ENCODE measurements at regions of chr17 and their contacts with region 1.

Region 1: GRCh38 chr17:20284570-20285295 is 182.6 kb downstream of the LGALS9B start:
- DNase-seq: peak; percentile 87
- ATAC-seq: peak; percentile 74
- H3K4me3 ChIP-seq: no peak overlapping the region
- H3K27ac ChIP-seq: peak overlapping the region; percentile 22; the same call in 1 of the 2 replicates
- H3K4me1 ChIP-seq: peaks cover 7% of the 10 kb centered on the region
- H3K27me3 ChIP-seq: no peaks in the 10 kb centered on the region
- CTCF ChIP-seq: no peak
- POLR2A ChIP-seq: no peak
- RAD21 ChIP-seq: no peak

Region 2: DNA sequence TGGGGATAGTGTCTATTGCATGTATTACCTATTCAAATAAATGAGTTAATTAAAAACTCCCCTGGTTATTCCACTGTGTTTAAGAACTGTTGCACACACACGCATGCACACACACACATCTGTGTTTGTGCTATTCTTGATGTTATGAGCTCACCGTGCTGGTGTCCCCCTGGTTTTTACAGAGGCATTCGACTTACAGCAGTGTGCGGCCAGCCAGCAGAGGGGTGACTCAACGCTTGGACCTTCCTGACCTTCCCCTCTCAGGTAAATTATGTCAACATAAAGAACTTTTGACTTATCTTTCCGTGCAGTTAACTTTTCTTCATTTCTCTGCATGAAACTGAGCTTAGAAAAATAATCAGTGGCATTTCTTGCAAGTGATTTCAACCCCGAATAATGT is 31.4 kb before region 1 on chr17:
- CTCF ChIA-PET with region 1: no interaction called
- POLR2A ChIA-PET with region 1: no interaction called
- dilution Hi-C with region 1: no loop called
- in situ Hi-C with region 1: no loop called
- intact Hi-C with region 1: loop called (anchors 5 kb)
- DNase-seq: peak; percentile 59
- ATAC-seq: peak; percentile 37; the same call in 1 of the 2 replicates
- H3K4me3 ChIP-seq: no peak overlapping the region
- H3K27ac ChIP-seq: no peak overlapping the region
- H3K4me1 ChIP-seq: peaks cover 6% of the 10 kb centered on the region
- H3K27me3 ChIP-seq: no peaks in the 10 kb centered on the region
- CTCF ChIP-seq: no peak
- POLR2A ChIP-seq: no peak
- RAD21 ChIP-seq: no peak

Measured in IMR-90 (cell line).